ENCODE measurements at regions of chr9 and their contacts with region 1.

Region 1: GRCh38 chr9:35732122-35732799 is at the starts of genes CREB3 and TLN1:
- DNase-seq: peak; percentile 99
- ATAC-seq: peak; percentile 90
- H3K4me3 Mint-ChIP-seq: no peak within 1 kb of the TSS
- H3K27ac Mint-ChIP-seq: peak within 1 kb of the TSS; percentile 87
- H3K4me1 Mint-ChIP-seq: peaks cover 23% of the 10 kb centered on the region
- H3K27me3 Mint-ChIP-seq: no peaks in the 10 kb centered on the region
- total RNA-seq, gene CREB3: 20.5 to 24.7 TPM
- total RNA-seq, gene TLN1: 372 to 374 TPM

Region 2: DNA sequence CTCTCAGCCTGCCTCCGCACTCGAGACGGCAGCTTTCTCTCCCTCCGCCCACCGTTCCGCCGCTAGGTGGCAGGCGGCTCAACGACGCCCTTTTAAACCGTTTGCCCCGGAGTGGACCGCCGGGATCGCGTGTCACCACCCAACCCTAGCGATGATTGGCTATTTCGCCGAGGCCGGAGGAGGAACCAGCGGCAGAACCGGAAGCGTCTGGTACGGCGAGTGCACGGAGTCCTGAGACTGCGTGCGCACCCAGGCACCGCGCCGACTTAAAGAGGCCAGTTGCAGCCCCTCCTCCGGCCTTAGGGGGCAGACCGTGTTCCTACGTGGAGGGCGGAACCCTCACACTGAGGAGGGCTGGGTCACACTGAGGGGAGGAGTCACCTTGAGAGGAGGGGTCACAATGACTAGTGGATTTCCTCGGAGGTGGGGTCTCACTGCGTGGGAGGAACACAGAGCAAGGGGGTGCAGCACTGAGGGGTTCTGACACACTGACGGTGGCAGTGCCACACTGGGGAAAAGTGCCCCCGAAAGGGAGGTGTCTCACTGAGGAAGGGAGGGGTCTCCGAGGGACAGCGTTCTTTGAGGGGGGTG is 128.2 kb before region 1 on chr9:
- CTCF ChIA-PET with region 1: interaction called, 18 read pairs
- DNase-seq: peak; percentile 100
- ATAC-seq: peak; percentile 89
- H3K4me3 Mint-ChIP-seq: peak overlapping the region; percentile 88
- H3K27ac Mint-ChIP-seq: peak overlapping the region; percentile 98
- H3K4me1 Mint-ChIP-seq: peaks cover 30% of the 10 kb centered on the region
- H3K27me3 Mint-ChIP-seq: no peaks in the 10 kb centered on the region

Region 3: DNA sequence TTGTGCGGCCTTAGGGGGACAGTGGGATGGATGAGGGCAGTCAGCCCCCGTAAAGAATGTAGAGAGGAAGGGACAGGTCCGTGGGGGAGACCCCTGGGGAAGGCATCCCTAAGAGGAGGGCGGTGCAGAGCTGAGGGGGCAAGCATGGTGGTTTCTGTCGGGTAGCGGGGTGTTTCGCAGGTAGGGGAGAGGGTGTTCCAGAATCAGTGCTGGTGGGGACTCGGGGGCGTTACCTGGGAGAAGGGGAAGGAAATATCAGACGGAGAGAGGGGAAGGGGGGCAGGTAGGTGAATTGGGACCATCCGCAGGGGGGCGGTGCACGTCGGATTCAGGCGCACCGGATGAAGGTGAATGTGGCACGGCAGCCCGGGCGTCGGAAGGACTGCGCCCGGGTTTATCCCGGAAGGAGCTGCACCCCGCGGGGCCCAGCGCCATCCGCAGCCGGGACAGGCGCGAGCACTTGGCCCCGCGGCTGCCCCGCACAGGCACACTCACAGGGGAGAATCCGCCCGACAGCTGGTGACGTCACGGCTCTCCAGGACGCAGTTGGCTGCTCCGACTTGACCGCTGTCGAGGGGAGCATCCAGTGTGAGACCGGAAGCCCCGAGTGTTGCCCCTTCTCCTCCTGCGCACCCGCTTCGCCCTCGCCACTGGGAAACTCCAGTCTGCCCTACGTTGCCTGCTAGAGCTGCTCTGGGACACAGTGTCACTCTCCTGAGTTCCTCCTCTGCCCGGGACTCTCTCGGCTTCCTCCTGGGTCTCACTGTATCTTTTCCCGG is 115.4 kb before region 1 on chr9:
- CTCF ChIA-PET with region 1: interaction called, 15 read pairs
- DNase-seq: peak; percentile 88
- ATAC-seq: peak; percentile 72
- H3K4me3 Mint-ChIP-seq: peak overlapping the region; percentile 78
- H3K27ac Mint-ChIP-seq: peak overlapping the region; percentile 80
- H3K4me1 Mint-ChIP-seq: peaks cover 51% of the 10 kb centered on the region
- H3K27me3 Mint-ChIP-seq: no peaks in the 10 kb centered on the region

Region 4: DNA sequence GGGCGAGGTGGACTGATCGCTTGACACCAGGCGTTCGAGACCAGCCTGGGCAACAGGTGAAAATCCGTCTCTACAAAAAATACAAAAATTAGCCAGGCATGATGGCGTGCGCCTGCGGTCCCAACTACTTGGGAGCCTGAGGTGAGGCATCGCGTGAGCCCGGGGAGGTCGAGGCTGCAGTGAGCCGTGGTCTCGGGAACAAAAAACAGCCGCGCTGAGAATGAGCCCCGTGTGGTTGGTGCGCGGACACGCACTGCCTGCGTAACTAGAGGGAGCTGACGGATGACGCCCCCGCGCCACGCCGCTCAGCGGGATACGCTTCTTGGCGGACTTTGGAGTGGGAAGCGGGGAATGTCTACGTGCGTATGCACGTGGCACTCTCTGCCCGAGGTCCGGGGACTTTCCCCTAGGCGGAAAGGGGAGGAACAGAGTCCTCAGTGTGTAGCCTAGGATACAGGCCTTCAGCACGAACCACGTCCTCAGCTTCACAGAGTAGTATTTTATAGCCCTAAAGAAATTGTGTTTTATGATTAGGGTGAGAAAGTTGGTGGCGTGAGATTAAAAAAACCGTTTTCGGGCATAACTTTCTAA is 74.6 kb before region 1 on chr9 and contains the start of gene RMRP:
- CTCF ChIA-PET with region 1: interaction called, 21 read pairs
- DNase-seq: peak; percentile 95
- ATAC-seq: peak; percentile 92
- H3K4me3 Mint-ChIP-seq: peak within 1 kb of the TSS; percentile 84
- H3K27ac Mint-ChIP-seq: peak within 1 kb of the TSS; percentile 95
- H3K4me1 Mint-ChIP-seq: peaks cover 61% of the 10 kb centered on the region
- H3K27me3 Mint-ChIP-seq: peaks cover 4% of the 10 kb centered on the region
- total RNA-seq, gene RMRP: 6,751 to 13,083 TPM

Region 5: DNA sequence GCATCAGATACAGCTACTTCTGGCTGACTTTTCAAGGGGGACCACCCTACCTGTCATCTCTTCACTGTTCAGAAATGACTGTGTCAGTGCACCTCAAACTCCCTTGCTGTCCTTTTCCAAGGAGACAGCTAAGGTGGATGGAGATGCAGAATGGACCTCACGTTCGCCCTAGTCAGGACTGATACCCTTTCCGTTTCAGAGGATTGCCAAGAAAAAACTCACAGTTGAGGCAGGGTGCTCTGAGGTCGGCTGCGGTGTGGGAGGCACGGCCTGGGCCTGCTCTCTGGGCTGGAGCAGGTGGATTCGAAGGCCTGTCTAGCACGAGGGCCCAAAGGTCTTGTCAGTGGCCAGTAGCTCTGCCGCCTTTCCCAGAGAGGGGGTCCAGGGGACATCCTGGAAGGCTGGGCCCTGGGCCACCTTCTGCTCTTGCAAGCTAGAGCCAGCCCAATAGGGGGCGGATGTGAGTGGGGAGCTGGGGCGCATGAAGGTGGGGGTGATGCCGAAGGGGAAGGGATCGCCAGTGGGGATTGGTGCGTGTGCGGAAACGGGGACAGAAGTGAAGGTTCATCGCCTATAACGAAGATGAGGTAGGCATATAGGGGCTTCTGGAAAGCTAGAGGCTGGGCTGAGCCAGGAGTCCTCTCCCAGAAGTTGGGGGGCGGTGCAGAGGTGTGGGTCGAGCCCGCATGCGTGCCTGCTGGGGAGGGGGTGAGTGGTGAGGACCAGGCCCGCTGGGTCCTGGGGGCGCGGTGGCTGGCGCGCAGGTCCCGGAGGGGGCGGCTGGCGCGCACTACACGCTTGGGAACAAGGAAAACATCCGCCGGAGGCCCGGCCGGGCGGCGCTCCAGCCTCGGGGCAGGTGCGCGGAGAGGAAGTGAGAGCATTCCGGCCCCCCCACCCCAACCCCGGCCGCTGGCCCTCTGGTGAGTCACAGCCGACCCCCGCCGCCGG is 24.3 kb after region 1 on chr9:
- CTCF ChIA-PET with region 1: interaction called, 29 read pairs
- DNase-seq: peak; percentile 90
- ATAC-seq: peak; percentile 87
- H3K4me3 Mint-ChIP-seq: peak overlapping the region; percentile 96
- H3K27ac Mint-ChIP-seq: peak overlapping the region; percentile 92
- H3K4me1 Mint-ChIP-seq: peaks cover 33% of the 10 kb centered on the region
- H3K27me3 Mint-ChIP-seq: no peaks in the 10 kb centered on the region

Region 6: GRCh38 chr9:35774907-35775635 is 42.8 kb after region 1 on chr9:
- CTCF ChIA-PET with region 1: no interaction called
- DNase-seq: no peak
- ATAC-seq: no peak
- H3K4me3 Mint-ChIP-seq: no peak overlapping the region
- H3K27ac Mint-ChIP-seq: peak overlapping the region; percentile 41
- H3K4me1 Mint-ChIP-seq: peaks cover 2% of the 10 kb centered on the region
- H3K27me3 Mint-ChIP-seq: no peaks in the 10 kb centered on the region